ENCODE measurements at regions of chr7 and their contacts with region 1.

Region 1: DNA sequence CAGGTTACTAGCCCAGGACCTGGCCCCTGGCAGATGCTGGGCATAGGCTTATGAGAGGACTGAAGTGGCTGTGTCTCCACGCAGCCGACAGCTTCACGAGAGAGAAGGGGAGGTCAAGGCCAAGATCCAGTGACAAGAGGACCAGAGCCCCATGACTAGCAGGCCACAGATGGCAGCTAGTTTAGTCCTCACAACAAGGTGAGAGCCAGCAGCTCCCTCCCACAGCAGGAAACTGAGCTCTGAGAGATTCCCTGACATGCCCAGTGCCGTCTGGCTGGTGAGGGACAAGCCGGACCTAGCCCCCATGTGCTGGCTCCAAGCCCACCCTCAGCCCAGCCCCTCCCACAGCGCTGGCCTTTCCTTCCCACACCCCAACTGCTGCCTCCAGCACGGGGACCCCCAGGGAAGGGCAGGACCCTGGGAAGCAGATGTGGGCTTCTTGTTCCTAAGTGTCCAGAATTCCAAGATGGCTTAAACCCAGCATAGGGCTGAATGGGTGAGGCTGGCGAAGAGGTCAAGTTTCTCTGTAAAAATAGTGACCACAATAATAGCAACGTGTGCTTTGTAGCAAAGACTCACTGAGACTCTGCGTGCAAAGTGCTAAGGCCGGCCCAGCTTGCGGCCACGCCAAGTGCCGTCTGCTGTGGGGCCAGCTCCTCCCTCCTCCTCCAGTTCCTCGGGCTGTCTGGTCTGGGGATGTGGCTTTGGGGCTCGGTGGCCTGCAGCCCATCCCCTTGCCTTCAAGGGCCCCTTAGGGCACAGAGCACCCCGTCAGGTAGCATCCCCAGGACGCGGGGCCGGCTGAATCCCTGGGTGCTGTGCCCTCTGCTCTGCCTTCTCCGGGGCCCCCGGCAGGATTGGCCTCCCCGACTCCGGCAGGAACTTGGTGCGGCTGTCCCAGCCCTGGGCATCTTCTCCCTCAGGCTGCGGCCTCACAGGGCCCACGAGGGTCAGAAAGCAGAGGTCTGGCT is 7.8 kb upstream of the FAM20C start:
- DNase-seq: no peak
- H3K4me3 ChIP-seq: no peak overlapping the region
- H3K27ac ChIP-seq: no peak overlapping the region
- H3K4me1 ChIP-seq: no peaks in the 10 kb centered on the region
- H3K27me3 ChIP-seq: peaks cover 1% of the 10 kb centered on the region
- CTCF ChIP-seq: no peak

Region 2: DNA sequence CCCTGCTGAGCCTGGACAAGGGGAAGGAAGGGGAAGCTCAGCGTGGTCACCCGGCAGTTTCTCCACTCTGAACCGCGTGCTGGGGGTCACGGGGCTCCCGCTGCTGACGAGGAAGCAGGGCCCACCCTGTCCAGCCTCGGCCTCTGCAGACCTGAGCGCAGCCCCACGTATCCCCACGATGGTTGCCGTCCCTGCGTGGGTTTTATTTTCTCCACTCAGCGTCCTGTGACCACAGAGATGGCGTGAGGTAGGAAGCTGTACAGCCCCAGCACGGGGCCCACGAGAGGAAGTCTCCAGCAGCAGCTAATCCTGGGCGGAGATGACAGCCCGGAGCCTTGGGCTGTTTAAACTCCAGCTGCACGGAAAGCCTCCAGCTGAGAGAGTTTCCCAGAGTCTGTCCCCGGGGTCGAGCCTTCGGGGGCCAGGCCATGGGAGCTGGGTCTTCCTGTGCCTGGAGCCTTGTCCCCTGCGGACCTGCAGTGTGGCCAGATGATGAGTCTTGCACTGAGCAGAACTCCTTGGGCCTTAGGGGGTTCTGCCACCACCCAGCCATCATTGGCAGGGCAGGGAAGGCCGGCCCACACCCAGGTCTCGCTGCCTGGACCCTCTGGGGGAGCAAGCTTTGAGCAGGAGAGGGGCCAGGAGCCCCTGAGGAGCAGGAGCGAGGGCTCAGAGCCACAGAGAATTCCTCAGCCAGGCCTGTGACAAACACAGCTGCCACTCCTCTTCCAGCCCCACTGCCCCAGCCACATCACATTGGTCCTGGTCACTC is 65.0 kb before region 1 on chr7:
- CTCF ChIA-PET with region 1: no interaction called
- dilution Hi-C with region 1: no loop called
- in situ Hi-C with region 1: no loop called
- intact Hi-C with region 1: no loop called
- DNase-seq: no peak
- H3K4me3 ChIP-seq: no peak overlapping the region
- H3K27ac ChIP-seq: no peak overlapping the region
- H3K4me1 ChIP-seq: no peaks in the 10 kb centered on the region
- H3K27me3 ChIP-seq: no peaks in the 10 kb centered on the region
- CTCF ChIP-seq: no peak

Region 3: DNA sequence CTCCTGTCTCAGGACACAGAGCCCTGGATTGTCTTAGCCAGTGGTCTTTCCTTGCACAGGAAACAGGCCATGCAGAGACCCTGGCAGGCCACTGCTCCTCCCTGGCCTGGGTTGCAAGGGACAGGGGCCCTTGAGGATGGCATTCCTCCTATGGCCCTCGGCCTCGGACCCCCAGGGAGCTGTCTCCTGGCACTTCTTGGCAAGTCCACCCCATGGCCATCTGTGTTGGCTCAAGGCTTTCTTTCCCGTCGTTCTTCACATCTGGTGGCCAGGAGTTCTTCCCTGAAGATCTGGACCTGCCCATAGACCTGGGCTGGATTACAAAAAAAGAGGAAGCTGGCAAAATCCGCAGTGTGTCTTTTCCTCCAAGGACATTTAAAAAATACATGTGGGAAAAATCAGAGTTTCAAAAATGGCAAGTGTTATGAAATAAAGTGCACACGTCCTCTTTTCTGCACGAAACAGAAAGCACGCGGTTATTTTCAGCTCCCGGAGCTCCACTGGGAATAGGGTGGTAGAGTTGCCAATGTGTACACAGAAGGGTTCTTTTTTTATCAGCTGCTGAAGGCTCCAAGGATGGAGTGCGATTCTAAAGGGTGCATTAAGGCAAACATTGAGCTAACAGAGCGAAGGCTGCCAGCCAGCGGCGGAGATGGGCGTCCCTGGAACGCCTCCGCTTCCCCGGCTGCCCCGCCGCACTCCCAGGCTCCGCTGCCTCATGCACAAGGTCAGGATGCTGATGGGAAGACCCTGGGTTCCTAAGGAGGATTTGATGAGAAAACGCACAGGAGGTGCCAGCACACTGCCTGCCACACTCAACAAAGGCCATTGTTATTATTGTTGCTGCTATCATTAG is 55.0 kb before region 1 on chr7:
- CTCF ChIA-PET with region 1: no interaction called
- dilution Hi-C with region 1: loop called (anchors 5 kb)
- in situ Hi-C with region 1: no loop called
- intact Hi-C with region 1: no loop called
- DNase-seq: no peak
- H3K4me3 ChIP-seq: no peak overlapping the region
- H3K27ac ChIP-seq: no peak overlapping the region
- H3K4me1 ChIP-seq: no peaks in the 10 kb centered on the region
- H3K27me3 ChIP-seq: no peaks in the 10 kb centered on the region
- CTCF ChIP-seq: no peak

Region 4: GRCh38 chr7:229184-229964 is 44.8 kb after region 1 on chr7:
- CTCF ChIA-PET with region 1: no interaction called
- dilution Hi-C with region 1: loop called (anchors 5 kb)
- in situ Hi-C with region 1: no loop called
- intact Hi-C with region 1: no loop called
- DNase-seq: no peak
- H3K4me3 ChIP-seq: no peak overlapping the region
- H3K27ac ChIP-seq: no peak overlapping the region
- H3K4me1 ChIP-seq: peaks cover 32% of the 10 kb centered on the region
- H3K27me3 ChIP-seq: no peaks in the 10 kb centered on the region
- CTCF ChIP-seq: no peak

Region 5: DNA sequence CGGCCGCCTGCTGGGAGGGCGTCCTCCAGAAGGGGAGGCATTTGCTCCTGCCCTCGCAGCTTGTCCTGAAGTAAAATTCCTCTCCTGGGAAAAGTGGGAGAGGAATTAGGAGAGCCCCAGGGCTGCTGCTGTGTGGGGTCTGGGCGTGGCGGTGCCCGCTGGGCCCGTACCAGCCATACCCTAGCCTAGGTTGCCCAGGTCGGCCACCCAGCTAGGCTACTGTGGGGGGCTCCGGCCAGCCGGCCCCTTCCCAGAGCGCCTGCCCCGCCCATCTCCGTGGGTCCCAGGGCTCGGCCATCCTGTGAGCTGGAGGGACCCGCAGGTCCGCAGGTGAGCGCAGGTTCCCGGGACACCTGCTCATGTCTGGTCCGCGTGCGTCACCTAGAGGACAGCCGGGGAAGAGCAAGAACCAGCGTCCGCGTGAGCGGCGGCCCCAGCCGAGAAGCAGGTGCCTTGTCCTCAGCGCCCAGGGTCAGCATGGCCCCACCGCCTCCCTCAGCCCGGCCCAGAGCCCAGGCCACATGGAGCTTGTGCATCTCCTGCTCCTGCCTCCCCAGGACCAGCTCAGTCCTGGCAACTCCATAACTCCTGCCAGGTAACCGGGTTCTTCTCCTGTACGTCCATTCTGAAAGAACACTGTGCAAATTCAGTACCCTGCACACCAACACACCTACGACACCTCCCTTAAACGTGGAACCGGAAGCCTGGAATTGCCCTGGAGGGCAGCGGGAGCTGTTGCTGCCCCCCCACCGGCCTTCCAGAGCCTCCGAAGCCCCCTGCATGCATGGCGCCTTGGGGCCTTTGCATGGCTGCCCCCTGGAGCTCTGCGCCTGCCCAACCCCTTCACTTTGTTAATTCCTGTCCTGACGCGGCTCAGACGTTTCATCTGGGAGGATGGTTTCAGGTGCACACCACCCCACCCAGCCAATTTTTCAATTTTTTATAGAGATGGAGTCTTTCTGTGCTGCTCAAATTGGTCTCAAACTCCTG is 82.6 kb after region 1 on chr7:
- CTCF ChIA-PET with region 1: no interaction called
- dilution Hi-C with region 1: loop called (anchors 5 kb)
- in situ Hi-C with region 1: no loop called
- intact Hi-C with region 1: no loop called
- DNase-seq: peak; percentile 20
- H3K4me3 ChIP-seq: no peak overlapping the region
- H3K27ac ChIP-seq: no peak overlapping the region
- H3K4me1 ChIP-seq: no peaks in the 10 kb centered on the region
- H3K27me3 ChIP-seq: no peaks in the 10 kb centered on the region
- CTCF ChIP-seq: no peak